Heart right ventricle (tissue), 16 donors: ENCODE measurements at regions of chr2 and their contacts with region 1.

Region 1: DNA sequence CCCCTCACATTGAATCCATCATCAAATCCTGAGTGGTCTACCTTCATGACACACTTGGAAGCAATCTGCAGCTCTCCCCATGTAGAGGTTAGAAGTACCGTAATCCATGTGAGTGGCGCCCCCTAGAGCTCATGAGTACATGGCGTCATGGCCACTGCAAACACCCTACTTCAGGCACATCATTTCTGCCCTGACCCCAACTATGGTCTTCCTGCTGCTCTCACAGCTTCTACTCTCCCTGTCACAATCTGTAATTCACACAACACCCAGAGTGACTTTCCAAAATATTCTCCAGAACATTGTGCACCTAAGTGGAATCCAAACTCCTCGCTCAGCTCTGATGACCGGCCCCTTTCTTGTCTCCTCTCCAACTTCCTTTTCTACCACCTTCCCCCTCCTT is 141.9 kb downstream of the ANKRD44 start:
- DNase-seq: peak; percentile 40 to 46
- ATAC-seq: peak in 6 of 8 donors; percentile 43 to 75 (median 64)
- H3K4me3 ChIP-seq: no peak overlapping the region
- H3K27ac ChIP-seq: no peak overlapping the region
- H3K4me1 ChIP-seq: peaks cover 0 to 22% (median 8%) of the 10 kb centered on the region in 9 donors
- H3K27me3 ChIP-seq: no peaks in the 10 kb centered on the region
- CTCF ChIP-seq: peak; percentile 21 to 71 (median 54)

Region 2: GRCh38 chr2:197137826-197138477 is 30.8 kb before region 1 on chr2:
- intact Hi-C with region 1: loop called in 1 of 10 experiments (anchors 2 kb)
- DNase-seq: no peak
- ATAC-seq: no peak
- H3K4me3 ChIP-seq: no peak overlapping the region
- H3K27ac ChIP-seq: no peak overlapping the region
- H3K4me1 ChIP-seq: peaks cover 0 to 49% (median 0%) of the 10 kb centered on the region in 9 donors
- H3K27me3 ChIP-seq: no peaks in the 10 kb centered on the region
- CTCF ChIP-seq: no peak

Region 3: DNA sequence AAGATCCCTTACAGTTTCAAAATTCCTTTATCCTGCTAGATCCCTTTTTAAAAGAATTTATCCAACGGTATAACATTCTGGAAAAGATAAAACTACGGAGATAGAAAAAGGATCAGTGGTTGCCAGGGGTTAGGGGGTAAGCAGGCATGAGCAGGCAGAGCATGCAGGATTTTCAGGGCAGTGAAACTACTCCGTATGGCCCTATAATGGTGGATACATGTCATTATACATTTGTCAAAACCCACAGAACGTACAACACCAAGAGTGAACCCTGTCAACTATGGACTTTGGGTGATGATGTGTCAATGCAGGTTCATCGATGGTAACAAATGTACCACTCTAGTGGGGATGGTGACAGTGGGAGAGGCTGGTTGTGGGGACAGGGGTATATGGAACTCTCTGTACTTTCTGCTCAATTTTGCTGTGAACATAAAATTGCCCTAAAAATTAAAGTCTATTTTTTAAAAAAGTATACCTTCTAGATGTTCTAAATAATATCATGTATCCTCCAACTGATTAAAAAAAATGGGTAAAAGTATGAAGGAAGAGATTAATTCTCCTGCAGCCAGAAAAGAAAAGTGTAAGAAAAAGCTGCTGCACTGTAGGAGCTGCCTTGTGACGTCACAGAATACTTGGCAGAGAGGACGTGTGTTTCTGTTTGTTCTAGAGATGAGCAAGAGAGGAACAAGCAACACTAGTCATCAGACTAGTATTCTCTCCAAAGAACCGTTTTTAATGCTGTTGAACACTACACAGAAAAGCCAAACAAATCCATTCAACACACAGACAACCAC is 118.3 kb after region 1 on chr2:
- intact Hi-C with region 1: no loop called
- DNase-seq: peak in 1 of 2 donors; percentile 67
- ATAC-seq: peak in 7 of 8 donors; percentile 76 to 91 (median 86)
- H3K4me3 ChIP-seq: no peak overlapping the region
- H3K27ac ChIP-seq: peak overlapping the region in 1 of 10 donors; percentile 79
- H3K4me1 ChIP-seq: peaks cover 0 to 52% (median 0%) of the 10 kb centered on the region in 9 donors
- H3K27me3 ChIP-seq: no peaks in the 10 kb centered on the region
- CTCF ChIP-seq: no peak